Caco-2 (cell line): ENCODE measurements at regions of chr3 and their contacts with region 1.

Region 1: GRCh38 chr3:48556793-48557626 is at the start of gene PFKFB4:
- DNase-seq: peak; percentile 99
- H3K4me3 ChIP-seq: peak within 1 kb of the TSS; percentile 62
- H3K4me3 Mint-ChIP-seq: peak within 1 kb of the TSS; percentile 81
- H3K27ac Mint-ChIP-seq: peak within 1 kb of the TSS; percentile 63
- H3K4me1 ChIP-seq: peaks cover 28% of the 10 kb centered on the region
- H3K4me1 Mint-ChIP-seq: peaks cover 21% of the 10 kb centered on the region
- H3K27me3 ChIP-seq: no peaks in the 10 kb centered on the region
- H3K27me3 Mint-ChIP-seq: no peaks in the 10 kb centered on the region
- CTCF ChIP-seq: no peak
- total RNA-seq, gene PFKFB4: 11.2 and 14.4 TPM in 2 replicates

Region 2: GRCh38 chr3:48446425-48447193 is 110.4 kb before region 1 on chr3 and contains the start of gene ATRIP:
- CTCF ChIA-PET with region 1: interaction called, 3 read pairs
- POLR2A ChIA-PET with region 1: interaction called, 7 read pairs
- intact Hi-C with region 1: loop called (anchors 2 kb)
- DNase-seq: peak; percentile 91 to 96
- H3K4me3 ChIP-seq: peak within 1 kb of the TSS; percentile 87
- H3K4me3 Mint-ChIP-seq: peak within 1 kb of the TSS; percentile 95
- H3K27ac Mint-ChIP-seq: peak within 1 kb of the TSS; percentile 89
- H3K4me1 ChIP-seq: peaks cover 11% of the 10 kb centered on the region; the same call in 1 of the 2 replicates
- H3K4me1 Mint-ChIP-seq: peaks cover 26% of the 10 kb centered on the region
- H3K27me3 ChIP-seq: no peaks in the 10 kb centered on the region
- H3K27me3 Mint-ChIP-seq: no peaks in the 10 kb centered on the region
- CTCF ChIP-seq: no peak
- total RNA-seq, gene ATRIP: 14.4 and 15.9 TPM in 2 replicates

Region 3: DNA sequence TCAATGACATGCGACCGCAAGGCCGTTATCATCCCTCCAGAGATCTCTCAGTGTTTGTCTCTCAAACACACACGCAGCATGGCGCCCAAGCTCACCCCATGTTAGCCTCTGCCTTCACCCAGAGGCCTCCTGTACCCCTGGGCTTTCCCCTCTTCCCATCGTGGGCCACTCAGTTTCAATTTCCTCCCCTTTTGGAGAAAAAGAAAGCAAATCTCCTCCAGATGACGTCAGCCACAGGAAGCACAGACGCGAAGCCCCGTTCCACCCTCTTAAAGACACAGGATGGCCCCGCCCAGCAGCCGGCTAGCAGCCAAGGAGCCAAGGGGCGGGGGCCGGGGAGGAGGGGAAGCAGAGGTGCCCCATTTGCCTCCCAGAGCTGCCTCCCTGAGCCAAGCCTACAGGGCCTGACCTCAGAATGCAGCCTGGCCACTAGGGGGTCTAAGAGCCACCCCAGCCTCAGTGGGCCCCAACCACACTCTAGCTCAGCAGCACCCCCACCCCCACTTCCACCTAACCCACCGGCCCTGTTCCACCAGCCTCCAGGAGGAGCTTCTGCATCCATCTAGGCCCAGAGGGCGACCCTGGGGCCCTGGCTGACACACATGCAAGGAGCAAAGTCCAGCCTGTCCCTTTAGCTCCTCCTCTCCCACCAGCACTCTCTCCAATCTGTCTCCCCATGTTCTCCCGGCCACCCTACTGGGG is 83.9 kb before region 1 on chr3:
- CTCF ChIA-PET with region 1: interaction called, 23 read pairs
- POLR2A ChIA-PET with region 1: interaction called, 9 read pairs
- intact Hi-C with region 1: no loop called
- DNase-seq: peak; percentile 98 to 99
- H3K4me3 ChIP-seq: peak overlapping the region; percentile 39
- H3K4me3 Mint-ChIP-seq: peak overlapping the region; percentile 88
- H3K27ac Mint-ChIP-seq: peak overlapping the region; percentile 97
- H3K4me1 ChIP-seq: peaks cover 22% of the 10 kb centered on the region; the same call in 1 of the 2 replicates
- H3K4me1 Mint-ChIP-seq: peaks cover 20% of the 10 kb centered on the region
- H3K27me3 ChIP-seq: no peaks in the 10 kb centered on the region
- H3K27me3 Mint-ChIP-seq: no peaks in the 10 kb centered on the region
- CTCF ChIP-seq: peak; percentile 78

Region 4: DNA sequence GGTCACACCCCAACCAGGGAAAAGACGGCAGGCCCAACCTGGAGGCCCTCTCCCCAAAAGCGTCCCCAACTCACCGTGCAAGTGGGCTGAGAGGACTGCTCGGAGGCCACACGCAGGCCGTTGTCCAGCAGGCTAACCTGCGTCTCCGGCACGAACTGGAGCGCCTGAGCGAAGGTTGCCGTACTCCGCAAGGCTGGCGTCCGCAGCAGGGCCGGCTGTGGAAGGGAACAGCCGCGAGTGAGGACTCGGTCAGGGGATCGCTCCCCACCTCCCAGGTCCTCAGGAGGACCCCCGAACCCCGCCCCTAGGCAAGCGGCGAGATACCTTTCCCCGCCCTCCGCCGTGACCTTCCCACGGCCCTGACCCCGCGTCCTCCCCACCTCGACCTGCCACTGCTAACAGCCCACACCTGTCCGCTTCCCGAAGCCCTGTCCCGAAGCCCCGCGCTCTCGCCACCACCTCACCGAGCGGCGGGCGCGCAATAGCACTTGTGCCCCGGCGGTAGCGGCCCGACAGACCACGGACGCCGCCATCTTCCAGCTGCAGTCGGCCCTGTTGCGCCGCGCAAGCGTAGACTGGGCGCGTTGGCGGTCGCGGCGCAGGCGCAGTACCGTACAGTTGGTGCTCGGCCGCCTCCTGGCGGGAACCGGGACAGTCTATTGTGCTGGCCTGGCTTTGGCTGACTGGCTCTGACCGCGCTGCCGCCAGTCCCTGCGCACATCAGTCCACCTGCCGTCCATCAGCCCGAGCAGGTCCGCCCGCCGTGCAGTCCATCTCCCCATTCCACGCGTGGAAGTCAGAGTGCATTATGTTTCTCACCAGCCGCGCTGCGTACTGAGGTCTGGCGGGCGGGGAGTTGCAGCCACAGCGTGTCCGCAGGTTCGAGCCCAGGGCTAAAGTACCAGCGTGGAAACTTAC is 52.3 kb after region 1 on chr3 and contains the start of gene UQCRC1:
- CTCF ChIA-PET with region 1: no interaction called
- POLR2A ChIA-PET with region 1: no interaction called
- intact Hi-C with region 1: loop called (anchors 2 kb)
- DNase-seq: peak; percentile 91 to 95
- H3K4me3 ChIP-seq: peak within 1 kb of the TSS; percentile 87
- H3K4me3 Mint-ChIP-seq: peak within 1 kb of the TSS; percentile 91
- H3K27ac Mint-ChIP-seq: peak within 1 kb of the TSS; percentile 96
- H3K4me1 ChIP-seq: peaks cover 11% of the 10 kb centered on the region
- H3K4me1 Mint-ChIP-seq: peaks cover 7% of the 10 kb centered on the region
- H3K27me3 ChIP-seq: no peaks in the 10 kb centered on the region
- H3K27me3 Mint-ChIP-seq: no peaks in the 10 kb centered on the region
- CTCF ChIP-seq: peak; percentile 45 to 68
- total RNA-seq, gene UQCRC1: 278 and 283 TPM in 2 replicates

Region 5: GRCh38 chr3:48663415-48664312 is 106.7 kb after region 1 on chr3:
- CTCF ChIA-PET with region 1: no interaction called
- POLR2A ChIA-PET with region 1: interaction called, 5 read pairs
- intact Hi-C with region 1: loop called (anchors 5 kb)
- DNase-seq: peak; percentile 99
- H3K4me3 ChIP-seq: peak overlapping the region; percentile 65
- H3K4me3 Mint-ChIP-seq: peak overlapping the region; percentile 93
- H3K27ac Mint-ChIP-seq: peak overlapping the region; percentile 99
- H3K4me1 ChIP-seq: peaks cover 10% of the 10 kb centered on the region
- H3K4me1 Mint-ChIP-seq: peaks cover 5% of the 10 kb centered on the region
- H3K27me3 ChIP-seq: no peaks in the 10 kb centered on the region
- H3K27me3 Mint-ChIP-seq: no peaks in the 10 kb centered on the region
- CTCF ChIP-seq: peak; percentile 84 to 86